ENCODE measurements at regions of chr3 and their contacts with region 1.

Region 1: DNA sequence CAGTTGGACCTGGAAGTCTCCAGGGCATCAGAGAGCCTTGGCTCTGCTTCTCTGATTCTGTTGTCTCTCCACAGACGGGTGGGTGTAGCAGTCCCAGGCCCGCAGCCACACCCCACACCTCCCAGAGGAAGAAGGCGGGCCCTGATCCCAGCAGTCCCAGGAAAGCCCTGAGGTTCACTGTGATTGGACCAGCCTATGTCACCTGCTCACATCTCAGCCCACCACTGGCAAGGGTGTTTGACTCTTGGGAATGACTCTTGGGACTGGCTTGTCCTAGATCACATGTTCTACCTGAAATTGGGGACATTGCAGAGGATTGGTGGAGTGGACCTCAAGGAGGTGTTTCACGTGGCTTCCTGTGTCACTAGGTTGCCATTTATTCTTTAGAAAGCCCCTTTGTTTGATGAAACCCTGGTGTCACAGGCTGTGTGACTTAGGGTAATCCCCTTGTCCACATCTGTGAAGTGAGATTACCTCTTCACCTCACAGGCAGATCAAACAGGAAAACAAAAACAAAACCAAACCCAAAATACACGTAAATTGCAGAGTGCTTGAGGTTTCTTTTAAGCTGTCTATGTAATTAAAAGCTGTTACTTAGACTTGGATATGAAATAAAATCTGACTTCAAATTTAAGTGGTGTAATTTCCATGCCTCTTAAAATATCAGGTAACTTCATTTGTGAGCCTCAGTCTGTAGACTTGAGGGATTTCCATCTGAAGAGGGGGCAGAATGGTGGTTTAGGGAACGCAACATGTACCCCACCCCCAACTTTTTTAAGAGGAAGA is 26.7 kb downstream of the FLNB start:
- DNase-seq: no peak
- ATAC-seq: peak; percentile 92
- H3K4me3 Mint-ChIP-seq: peak overlapping the region; percentile 57
- H3K27ac Mint-ChIP-seq: peak overlapping the region; percentile 77
- H3K4me1 Mint-ChIP-seq: peaks cover 37% of the 10 kb centered on the region
- H3K27me3 Mint-ChIP-seq: no peaks in the 10 kb centered on the region
- CTCF ChIP-seq: no peak

Region 2: DNA sequence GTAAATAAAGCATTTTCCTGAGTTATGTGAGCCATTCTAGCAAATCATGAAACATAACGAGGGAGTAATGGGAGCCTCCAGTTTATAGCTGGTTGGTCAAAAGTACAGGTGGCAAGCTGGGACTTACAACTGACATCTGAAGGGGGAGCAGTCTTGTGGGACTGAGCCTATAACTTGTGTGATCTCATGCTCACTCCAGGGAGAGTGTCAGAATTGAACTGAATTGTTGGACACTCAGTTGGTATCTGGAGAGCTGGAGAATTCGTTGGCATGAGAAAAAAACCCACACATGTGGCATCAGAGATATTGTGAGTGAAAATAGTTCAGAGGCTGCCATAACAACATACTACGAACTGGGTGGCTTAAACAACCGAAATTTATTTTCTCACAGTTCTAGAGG is 319.2 kb before region 1 on chr3:
- CTCF ChIA-PET with region 1: no interaction called
- POLR2A ChIA-PET with region 1: no interaction called
- intact Hi-C with region 1: no loop called
- DNase-seq: no peak
- ATAC-seq: no peak
- H3K4me3 Mint-ChIP-seq: no peak overlapping the region
- H3K27ac Mint-ChIP-seq: no peak overlapping the region
- H3K4me1 Mint-ChIP-seq: no peaks in the 10 kb centered on the region
- H3K27me3 Mint-ChIP-seq: no peaks in the 10 kb centered on the region
- CTCF ChIP-seq: no peak

Region 3: DNA sequence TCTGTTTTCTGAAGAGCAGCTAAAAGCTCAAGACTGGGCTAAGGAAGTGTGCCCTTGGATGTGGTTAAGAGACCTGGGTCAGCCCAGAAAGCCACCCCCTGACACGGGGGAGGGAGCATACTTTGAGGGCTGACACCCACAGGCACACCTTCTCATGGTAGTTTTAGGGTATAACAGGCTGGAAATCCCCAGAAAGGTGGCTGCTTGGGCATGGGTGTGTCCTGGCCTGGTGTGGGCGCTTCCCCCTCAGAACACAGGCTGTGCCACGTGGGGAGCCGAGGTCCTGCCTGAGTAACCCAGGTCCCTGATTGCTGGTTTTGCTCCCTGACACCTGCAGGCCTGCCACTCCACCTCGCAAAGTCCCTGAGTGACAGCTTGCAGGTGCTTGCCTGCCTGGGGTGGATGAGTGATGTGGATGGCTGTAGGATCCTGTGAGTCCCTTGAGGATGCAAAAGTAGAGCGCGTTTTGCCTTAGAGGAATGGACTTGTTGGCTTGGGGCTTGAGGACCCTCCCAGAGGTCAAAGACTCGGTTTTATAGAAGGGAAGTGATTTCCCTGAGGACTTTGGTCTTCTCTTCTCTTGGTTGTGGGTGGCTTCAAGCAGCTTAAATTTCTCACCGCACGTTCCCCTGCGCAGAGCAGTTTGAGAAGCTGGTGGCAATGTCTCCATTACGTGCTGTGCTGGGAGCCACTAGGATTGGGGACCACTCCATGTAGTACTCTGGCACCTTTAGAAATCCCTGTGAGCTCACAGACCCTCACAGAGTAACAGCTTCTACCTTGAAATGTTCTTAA is 81.4 kb after region 1 on chr3:
- CTCF ChIA-PET with region 1: no interaction called
- POLR2A ChIA-PET with region 1: interaction called, 5 read pairs
- intact Hi-C with region 1: loop called (anchors 10 kb)
- DNase-seq: peak; percentile 57
- ATAC-seq: peak; percentile 90
- H3K4me3 Mint-ChIP-seq: peak overlapping the region; percentile 60
- H3K27ac Mint-ChIP-seq: peak overlapping the region; percentile 92
- H3K4me1 Mint-ChIP-seq: peaks cover 74% of the 10 kb centered on the region
- H3K27me3 Mint-ChIP-seq: no peaks in the 10 kb centered on the region
- CTCF ChIP-seq: no peak

Measured in activated B cell treated with CpG ODN at 0.5 μM for 24 hours (primary cell).